Heart right ventricle (tissue), 16 donors: ENCODE measurements at regions of chr17 and their contacts with region 1.

Region 1: DNA sequence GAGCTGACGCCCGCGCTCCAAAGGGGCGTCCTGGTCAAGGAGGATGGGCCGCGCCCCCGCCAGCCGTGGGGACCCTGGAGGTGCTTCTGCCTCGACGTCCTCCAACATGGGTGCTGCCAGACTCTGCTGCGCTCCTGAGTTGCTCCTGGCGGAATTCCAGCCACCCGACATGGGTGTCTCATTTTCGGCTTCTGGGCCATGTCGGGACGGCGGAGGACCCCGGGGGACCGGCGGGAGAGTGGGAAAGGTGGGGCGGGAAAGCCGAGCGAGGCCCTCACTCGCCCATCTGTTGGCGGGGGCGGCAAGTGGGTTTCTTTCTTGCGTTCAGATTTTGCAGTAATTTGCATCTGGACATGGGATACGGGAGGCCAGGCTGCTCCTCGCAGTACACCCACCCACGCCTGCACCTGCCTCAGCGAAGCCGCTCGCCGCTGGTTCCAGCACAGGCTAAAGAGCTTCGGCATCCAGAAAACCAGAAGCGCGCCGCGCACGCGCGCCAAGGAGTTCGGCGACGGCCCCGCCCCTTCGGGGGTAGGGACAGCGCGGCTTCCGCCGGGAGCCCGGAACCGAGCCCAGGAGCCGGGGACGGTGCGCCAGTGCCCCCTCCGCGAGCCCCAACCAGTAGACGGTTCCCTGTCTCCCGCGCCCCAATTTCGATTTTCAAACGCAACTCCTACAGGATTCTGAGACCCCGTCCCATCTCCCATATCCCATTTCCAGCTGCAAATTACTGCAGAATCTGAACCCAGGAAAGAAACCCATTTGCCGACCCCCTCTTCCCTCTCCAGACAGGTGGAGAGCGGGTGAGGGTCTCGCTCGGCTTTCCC is at the start of gene ARMC7:
- DNase-seq: peak; percentile 90 to 95
- ATAC-seq: peak; percentile 87 to 91 (median 90)
- H3K4me3 ChIP-seq: peak within 1 kb of the TSS; percentile 68 to 96 (median 86)
- H3K27ac ChIP-seq: peak within 1 kb of the TSS; percentile 35 to 91 (median 86)
- H3K4me1 ChIP-seq: peaks cover 5 to 52% (median 31%) of the 10 kb centered on the region in 9 donors
- H3K27me3 ChIP-seq: no peaks in the 10 kb centered on the region
- CTCF ChIP-seq: no peak
- total RNA-seq, gene ARMC7: 4.7 to 7.9 (median 5.2) TPM

Region 2: DNA sequence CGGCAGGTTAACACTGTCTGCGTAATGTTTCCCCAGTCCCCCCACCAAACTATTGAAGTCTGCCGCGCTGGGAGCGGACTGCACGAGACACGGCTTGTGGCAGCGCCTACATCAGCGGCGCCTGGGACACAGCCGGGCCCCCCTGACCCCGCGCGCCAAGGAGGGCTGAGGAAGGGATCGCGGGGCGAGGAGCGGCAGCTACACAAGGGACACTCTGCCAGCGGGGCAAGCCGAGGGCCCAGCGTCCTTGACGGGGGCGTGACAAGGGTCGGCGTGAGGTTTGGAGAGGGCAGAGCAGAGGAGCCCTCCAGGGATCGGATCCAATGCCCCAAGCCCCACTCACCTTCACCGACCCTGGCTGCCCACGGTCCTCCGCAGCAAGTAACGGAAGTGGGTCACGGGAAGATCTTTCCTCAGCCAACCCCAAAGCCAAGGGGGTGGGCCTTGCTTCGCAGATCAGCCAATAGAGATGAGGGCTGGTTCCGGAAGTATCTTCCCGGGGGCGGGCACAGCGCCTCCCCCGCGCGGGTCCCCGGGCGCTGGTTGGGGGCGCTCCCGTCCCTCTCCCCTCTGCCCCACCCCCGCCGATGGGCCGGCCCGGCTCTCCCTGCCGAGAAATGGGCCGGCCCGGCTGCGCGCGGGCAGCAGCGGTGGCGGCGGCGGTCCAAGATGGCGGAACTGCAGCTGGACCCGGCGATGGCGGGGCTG is 62.9 kb before region 1 on chr17 and contains the starts of genes ATP5PD and KCTD2:
- intact Hi-C with region 1: loop called in 1 of 10 experiments (anchors 5 kb)
- DNase-seq: peak; percentile 96 to 97
- ATAC-seq: peak; percentile 98 to 99 (median 98)
- H3K4me3 ChIP-seq: peak within 1 kb of the TSS; percentile 74 to 100 (median 92)
- H3K27ac ChIP-seq: peak within 1 kb of the TSS; percentile 93 to 99 (median 98)
- H3K4me1 ChIP-seq: peaks cover 6 to 50% (median 31%) of the 10 kb centered on the region in 9 donors
- H3K27me3 ChIP-seq: no peaks in the 10 kb centered on the region
- CTCF ChIP-seq: peak in 2 of 9 donors; percentile 8 to 11
- total RNA-seq, gene ATP5PD: 678 to 1,003 (median 867) TPM
- total RNA-seq, gene KCTD2: 19.6 to 41.1 (median 29.6) TPM

Region 3: DNA sequence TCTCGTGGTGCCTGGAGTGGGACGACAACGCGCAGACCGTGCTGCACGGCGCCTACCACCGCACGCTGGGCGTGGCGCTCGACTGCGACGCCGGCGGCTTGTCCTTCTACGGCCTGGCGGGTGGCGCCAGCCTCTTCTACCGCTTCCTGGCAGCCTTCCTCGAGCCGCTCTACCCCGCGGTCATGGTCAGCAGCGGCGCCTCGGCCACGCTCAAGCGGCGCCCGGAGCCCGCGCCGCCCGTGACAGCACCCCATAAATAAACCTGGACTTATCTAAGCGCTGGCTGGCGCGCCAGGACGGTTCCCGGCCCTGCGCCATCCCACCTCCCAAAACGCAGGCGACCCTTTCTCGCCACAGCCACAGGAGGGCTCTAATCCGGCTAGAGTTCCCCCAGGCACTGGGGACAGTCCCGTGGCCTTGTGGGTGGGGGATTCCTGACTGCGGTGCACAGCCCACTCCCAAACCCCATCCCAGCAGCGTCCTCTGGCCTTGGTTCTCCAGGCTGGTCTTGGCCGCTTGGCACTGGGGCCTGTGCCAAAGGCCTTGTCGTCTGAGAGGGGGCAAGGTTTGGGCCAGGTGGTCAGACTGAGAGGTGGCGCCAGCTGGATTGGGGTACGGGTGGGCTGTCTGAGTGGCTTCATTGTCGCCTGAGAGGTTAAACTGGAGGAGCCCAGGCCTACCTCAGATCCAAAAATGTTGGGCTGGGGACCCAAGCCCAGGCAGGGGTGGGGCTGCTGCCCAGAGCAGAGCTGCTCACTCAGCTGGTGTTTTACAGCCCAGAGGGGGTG is 31.9 kb before region 1 on chr17:
- intact Hi-C with region 1: loop called in 2 of 10 experiments (anchors 5 kb)
- DNase-seq: peak; percentile 78 to 84
- ATAC-seq: peak; percentile 87 to 93 (median 90)
- H3K4me3 ChIP-seq: peak overlapping the region in 9 of 10 donors; percentile 24 to 57 (median 53)
- H3K27ac ChIP-seq: peak overlapping the region; percentile 70 to 90 (median 88)
- H3K4me1 ChIP-seq: peaks cover 7 to 42% (median 28%) of the 10 kb centered on the region in 9 donors
- H3K27me3 ChIP-seq: no peaks in the 10 kb centered on the region
- CTCF ChIP-seq: peak in 7 of 9 donors; percentile 25 to 59 (median 35)

Region 4: DNA sequence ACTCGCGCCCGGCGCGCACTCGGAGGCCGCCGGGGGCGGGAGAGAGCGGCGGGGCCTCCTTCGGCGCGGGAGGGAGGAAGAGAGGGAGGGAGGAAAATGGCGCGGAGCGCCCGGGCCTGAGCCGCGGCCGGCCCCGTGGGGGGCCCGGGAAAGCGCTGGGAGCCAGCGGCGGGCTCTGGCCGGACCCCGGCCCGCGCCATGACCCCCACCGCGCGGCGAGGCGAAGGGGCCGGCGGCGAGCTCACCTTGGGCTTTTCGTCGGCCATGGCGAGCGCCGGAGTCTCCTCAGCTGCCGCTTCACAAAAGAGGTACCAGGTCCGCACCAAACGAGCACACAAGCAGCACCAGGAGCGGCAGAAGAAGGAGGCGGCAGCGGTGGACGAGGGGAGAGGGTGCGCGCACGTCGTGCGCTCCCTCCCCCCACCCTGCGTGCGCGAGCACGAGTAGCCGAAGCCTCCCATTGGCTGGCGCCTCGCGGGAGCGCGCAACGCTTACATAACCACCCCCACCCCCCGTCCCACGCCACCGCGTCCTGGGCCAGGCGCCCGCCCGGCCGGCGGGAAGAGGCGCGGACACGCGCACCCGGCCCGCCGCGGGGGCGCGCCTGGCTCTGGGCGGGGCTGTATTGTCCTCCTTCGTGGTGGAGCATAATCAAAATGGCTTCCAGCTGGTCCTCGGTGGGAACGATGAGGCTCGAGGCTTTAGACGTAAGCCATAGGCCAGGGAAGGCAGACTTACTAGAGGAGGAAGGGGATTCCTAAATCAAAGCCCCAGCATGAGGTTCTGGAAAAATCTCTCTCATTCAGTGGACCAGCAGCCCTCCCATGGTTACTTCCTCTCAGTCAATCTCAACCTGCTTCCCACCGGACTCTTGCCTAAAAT is 73.2 kb after region 1 on chr17 and contains the start of gene SUMO2:
- intact Hi-C with region 1: loop called in 4 of 10 experiments (anchors 5 to 10 kb)
- DNase-seq: peak; percentile 95 to 97
- ATAC-seq: peak; percentile 95 to 97 (median 96)
- H3K4me3 ChIP-seq: peak within 1 kb of the TSS; percentile 63 to 99 (median 95)
- H3K27ac ChIP-seq: peak within 1 kb of the TSS; percentile 96 to 100 (median 99)
- H3K4me1 ChIP-seq: peaks cover 0 to 38% (median 33%) of the 10 kb centered on the region in 9 donors
- H3K27me3 ChIP-seq: no peaks in the 10 kb centered on the region
- CTCF ChIP-seq: peak in 7 of 9 donors; percentile 33 to 58 (median 40)
- total RNA-seq, gene SUMO2: 187 to 258 (median 218) TPM

Region 5: GRCh38 chr17:75405365-75406221 is 296.0 kb after region 1 on chr17 and contains the start of gene GRB2:
- intact Hi-C with region 1: loop called in 3 of 10 experiments (anchors 10 kb)
- DNase-seq: peak; percentile 99 to 100
- ATAC-seq: peak; percentile 97 to 99 (median 98)
- H3K4me3 ChIP-seq: peak within 1 kb of the TSS; percentile 82 to 100 (median 96)
- H3K27ac ChIP-seq: peak within 1 kb of the TSS; percentile 79 to 97 (median 94)
- H3K4me1 ChIP-seq: peaks cover 0 to 46% (median 36%) of the 10 kb centered on the region in 9 donors
- H3K27me3 ChIP-seq: no peaks in the 10 kb centered on the region
- CTCF ChIP-seq: peak in 1 of 9 donors; percentile 7
- total RNA-seq, gene GRB2: 43.9 to 85.5 (median 52.0) TPM